ENCODE measurements at regions of chr14 and their contacts with region 1.

Region 1: DNA sequence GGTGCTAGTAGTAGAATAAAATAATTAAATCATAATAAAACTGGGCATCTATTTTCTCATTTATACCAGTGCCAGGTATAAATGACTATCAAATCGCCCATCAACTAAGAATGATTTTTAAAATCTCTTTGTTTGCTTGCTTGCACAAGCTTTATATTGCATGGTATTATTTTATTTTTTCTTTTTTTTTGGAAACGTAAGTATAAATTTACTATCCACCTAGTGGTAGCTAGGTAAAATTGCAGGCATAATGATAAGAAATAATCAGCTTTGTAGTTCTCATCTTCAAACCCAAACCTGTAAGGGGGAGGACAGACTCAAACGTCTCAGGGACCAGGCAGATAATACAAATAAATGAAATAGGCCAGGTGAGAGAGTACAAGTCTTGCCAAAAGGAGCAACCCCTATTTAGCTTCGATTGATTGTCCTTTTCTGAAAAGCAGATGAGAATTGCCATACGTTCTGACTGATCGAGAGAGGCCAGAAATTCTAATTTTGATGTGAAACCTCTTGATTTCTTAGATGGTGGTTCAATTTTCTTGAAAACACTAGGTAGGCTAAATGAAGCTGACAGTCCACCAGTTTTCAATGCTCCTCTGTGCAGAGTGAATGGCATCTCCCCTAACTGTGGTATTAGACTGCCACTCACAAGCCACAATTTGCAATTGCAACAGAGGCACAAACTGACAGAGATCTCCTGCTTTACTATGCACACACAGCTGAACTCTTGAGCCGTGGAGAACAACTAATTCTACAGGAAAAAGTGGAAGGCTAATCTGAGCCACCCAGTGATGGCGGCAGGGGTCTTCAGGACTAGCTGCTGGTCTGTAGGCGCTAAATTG is 189.3 kb downstream of the DACT1 start:
- DNase-seq: no peak
- H3K4me3 ChIP-seq: no peak overlapping the region
- H3K4me3 Mint-ChIP-seq: no peak overlapping the region
- H3K27ac Mint-ChIP-seq: no peak overlapping the region
- H3K4me1 ChIP-seq: peaks cover 22% of the 10 kb centered on the region
- H3K4me1 Mint-ChIP-seq: peaks cover 14% of the 10 kb centered on the region
- H3K27me3 ChIP-seq: no peaks in the 10 kb centered on the region
- H3K27me3 Mint-ChIP-seq: no peaks in the 10 kb centered on the region
- CTCF ChIP-seq: peak in 1 of 2 experiments; percentile 14

Region 2: GRCh38 chr14:58626431-58626831 is 200.6 kb before region 1 on chr14:
- CTCF ChIA-PET with region 1: no interaction called
- POLR2A ChIA-PET with region 1: no interaction called
- intact Hi-C with region 1: no loop called
- DNase-seq: no peak
- H3K4me3 ChIP-seq: no peak overlapping the region
- H3K4me3 Mint-ChIP-seq: no peak overlapping the region
- H3K27ac Mint-ChIP-seq: no peak overlapping the region
- H3K4me1 ChIP-seq: no peaks in the 10 kb centered on the region; the same call in none of the 2 replicates
- H3K4me1 Mint-ChIP-seq: no peaks in the 10 kb centered on the region
- H3K27me3 ChIP-seq: no peaks in the 10 kb centered on the region
- H3K27me3 Mint-ChIP-seq: peaks cover 3% of the 10 kb centered on the region
- CTCF ChIP-seq: no peak

Region 3: GRCh38 chr14:58637391-58638230 is 189.5 kb before region 1 on chr14 and contains the start of gene DACT1:
- CTCF ChIA-PET with region 1: no interaction called
- POLR2A ChIA-PET with region 1: no interaction called
- intact Hi-C with region 1: loop called (anchors 5 kb)
- DNase-seq: peak; percentile 44 to 55
- H3K4me3 ChIP-seq: peak within 1 kb of the TSS; percentile 40
- H3K4me3 Mint-ChIP-seq: peak within 1 kb of the TSS; percentile 84
- H3K27ac Mint-ChIP-seq: no peak within 1 kb of the TSS
- H3K4me1 ChIP-seq: peaks cover 8% of the 10 kb centered on the region; the same call in 1 of the 2 replicates
- H3K4me1 Mint-ChIP-seq: no peaks in the 10 kb centered on the region
- H3K27me3 ChIP-seq: no peaks in the 10 kb centered on the region; the same call in 1 of the 2 replicates
- H3K27me3 Mint-ChIP-seq: peaks cover 29% of the 10 kb centered on the region
- CTCF ChIP-seq: no peak
- total RNA-seq, gene DACT1: 0.23 and 0.74 TPM in 2 replicates

Region 4: GRCh38 chr14:58749066-58749669 is 77.9 kb before region 1 on chr14:
- CTCF ChIA-PET with region 1: no interaction called
- POLR2A ChIA-PET with region 1: no interaction called
- intact Hi-C with region 1: no loop called
- DNase-seq: no peak
- H3K4me3 ChIP-seq: no peak overlapping the region
- H3K4me3 Mint-ChIP-seq: no peak overlapping the region
- H3K27ac Mint-ChIP-seq: no peak overlapping the region
- H3K4me1 ChIP-seq: 0 out of 2 replicates have a peak, but pooled peaks cover 5% of the 10 kb centered on the region
- H3K4me1 Mint-ChIP-seq: no peaks in the 10 kb centered on the region
- H3K27me3 ChIP-seq: no peaks in the 10 kb centered on the region
- H3K27me3 Mint-ChIP-seq: no peaks in the 10 kb centered on the region
- CTCF ChIP-seq: no peak

Region 5: DNA sequence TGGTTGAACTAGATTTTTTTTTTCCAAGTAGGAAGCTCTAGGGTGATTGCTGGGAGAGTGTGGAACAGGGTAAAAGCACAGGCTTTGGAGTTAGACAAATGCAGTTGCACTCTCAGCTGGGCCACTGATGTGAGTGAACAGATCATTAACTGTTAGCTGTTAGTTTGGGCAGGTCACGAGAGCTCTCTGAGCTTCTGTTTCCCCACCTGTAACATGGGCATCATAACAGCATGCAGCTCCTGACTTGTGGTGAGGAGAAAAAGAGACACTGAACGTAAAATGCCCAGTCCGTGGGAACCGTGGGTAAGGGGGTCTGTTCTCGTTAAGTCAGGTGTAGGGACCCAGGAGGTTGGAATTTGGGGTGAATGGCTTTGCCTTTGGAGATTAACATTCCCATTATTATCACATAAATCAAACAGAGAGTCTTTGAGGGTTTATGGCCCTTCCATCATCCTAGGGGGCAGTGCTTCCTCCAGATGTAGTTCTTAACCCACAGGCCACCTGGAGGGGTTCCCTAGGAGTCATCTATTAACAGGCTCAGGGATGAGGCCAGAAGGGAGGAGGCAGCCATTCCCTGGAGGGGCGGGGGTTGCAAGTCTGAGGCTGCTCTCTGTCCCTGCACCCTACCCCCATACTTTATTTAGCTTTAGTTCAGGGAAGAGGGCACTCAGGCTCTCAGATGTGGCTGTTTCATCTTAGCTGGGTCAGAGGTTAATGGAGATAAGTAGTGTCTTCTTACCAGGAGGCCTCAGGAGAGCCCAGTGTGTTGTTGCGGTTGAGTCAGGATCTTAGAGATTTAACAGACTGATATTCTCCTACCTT is 54.1 kb before region 1 on chr14:
- CTCF ChIA-PET with region 1: no interaction called
- POLR2A ChIA-PET with region 1: no interaction called
- intact Hi-C with region 1: loop called (anchors 5 kb)
- DNase-seq: peak; percentile 72 to 92
- H3K4me3 ChIP-seq: no peak overlapping the region
- H3K4me3 Mint-ChIP-seq: no peak overlapping the region
- H3K27ac Mint-ChIP-seq: peak overlapping the region; percentile 87
- H3K4me1 ChIP-seq: peaks cover 44% of the 10 kb centered on the region
- H3K4me1 Mint-ChIP-seq: peaks cover 33% of the 10 kb centered on the region
- H3K27me3 ChIP-seq: no peaks in the 10 kb centered on the region
- H3K27me3 Mint-ChIP-seq: no peaks in the 10 kb centered on the region
- CTCF ChIP-seq: peak; percentile 9 to 28

Region 6: DNA sequence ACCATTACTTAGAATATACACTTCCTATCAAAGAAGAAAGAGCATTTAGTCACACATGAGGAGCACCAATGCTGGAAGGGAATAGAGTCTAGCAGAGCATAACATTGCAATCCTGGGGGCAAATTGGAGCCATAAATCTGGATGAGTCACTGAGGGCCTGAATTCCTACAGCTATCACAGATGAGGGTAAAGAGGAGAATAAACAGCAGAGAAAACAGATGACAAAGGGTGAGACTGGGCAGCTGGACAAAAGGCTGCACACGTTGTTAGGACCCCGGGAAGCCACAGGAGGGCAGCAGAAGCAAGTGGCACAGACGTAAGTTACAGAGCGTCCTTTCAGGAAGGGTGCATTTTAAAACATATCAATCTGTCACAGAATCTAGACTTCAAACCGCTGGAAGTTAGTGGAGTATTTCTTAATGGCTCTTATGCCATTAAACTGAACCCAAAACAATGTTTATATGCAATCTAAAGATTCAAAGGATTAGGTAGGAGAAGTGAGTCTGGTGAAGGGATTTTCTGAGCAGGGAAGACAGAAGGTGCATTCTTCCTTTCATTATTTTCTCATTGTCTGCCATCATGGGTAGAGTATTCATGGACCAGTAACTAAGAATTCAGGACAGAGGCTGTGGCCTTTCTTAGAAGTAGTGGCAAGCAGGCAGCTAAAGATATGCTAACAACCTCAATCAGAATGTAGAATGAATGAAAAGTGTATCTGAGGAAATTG is 201.6 kb after region 1 on chr14:
- CTCF ChIA-PET with region 1: no interaction called
- POLR2A ChIA-PET with region 1: no interaction called
- intact Hi-C with region 1: no loop called
- DNase-seq: peak; percentile 67 to 71
- H3K4me3 ChIP-seq: no peak overlapping the region
- H3K4me3 Mint-ChIP-seq: no peak overlapping the region
- H3K27ac Mint-ChIP-seq: no peak overlapping the region
- H3K4me1 ChIP-seq: no peaks in the 10 kb centered on the region
- H3K4me1 Mint-ChIP-seq: peaks cover 9% of the 10 kb centered on the region
- H3K27me3 ChIP-seq: no peaks in the 10 kb centered on the region
- H3K27me3 Mint-ChIP-seq: peaks cover 7% of the 10 kb centered on the region
- CTCF ChIP-seq: peak; percentile 72 to 92

Measured in Caco-2 (cell line).